PC-3 (cell line): ENCODE measurements at regions of chr17 and their contacts with region 1.

Region 1: GRCh38 chr17:76758570-76758969 is 20.7 kb downstream of the MFSD11 start:
- DNase-seq: no peak
- ATAC-seq: no peak
- H3K4me3 ChIP-seq: no peak overlapping the region
- H3K27ac ChIP-seq: no peak overlapping the region
- H3K4me1 ChIP-seq: no peaks in the 10 kb centered on the region
- H3K27me3 ChIP-seq: no peaks in the 10 kb centered on the region
- CTCF ChIP-seq: no peak

Region 2: DNA sequence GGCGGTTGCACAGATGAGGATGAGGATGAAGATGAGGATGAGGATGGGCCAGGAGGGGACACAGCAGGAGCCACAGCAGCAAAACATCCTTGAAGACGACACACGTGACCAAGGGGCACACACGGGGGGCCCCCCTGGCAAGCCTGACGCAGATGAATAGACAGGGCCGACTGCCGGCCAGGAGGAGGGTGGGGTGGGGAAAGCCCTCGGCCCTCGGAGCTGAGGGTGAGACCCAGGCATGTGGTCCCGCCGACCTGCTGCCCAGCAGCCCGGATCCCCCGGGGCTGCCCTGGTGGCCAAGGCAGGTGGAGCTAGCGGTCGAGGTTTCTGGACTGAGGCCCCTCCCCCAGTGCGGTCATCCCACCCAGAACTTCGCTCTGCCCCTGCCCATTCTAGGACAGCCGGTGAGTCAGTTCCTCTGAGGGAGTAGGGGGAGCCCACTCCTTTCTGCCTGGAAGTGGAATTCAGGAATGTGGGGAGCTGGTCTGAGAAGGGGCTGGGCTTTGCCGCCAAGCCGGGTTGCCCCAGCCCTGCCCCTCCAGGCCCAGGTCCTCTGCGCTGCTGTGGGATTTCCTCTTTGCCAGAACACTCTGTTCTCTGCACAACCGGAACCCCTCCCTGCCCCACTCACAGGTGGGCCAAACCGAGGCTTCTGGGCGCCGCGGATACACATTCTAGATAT is 231.0 kb before region 1 on chr17:
- CTCF ChIA-PET with region 1: no interaction called
- POLR2A ChIA-PET with region 1: no interaction called
- intact Hi-C with region 1: no loop called
- DNase-seq: peak; percentile 85
- ATAC-seq: peak; percentile 59
- H3K4me3 ChIP-seq: peak overlapping the region; percentile 55
- H3K27ac ChIP-seq: peak overlapping the region; percentile 16; the same call in 1 of the 2 replicates
- H3K4me1 ChIP-seq: peaks cover 57% of the 10 kb centered on the region
- H3K27me3 ChIP-seq: no peaks in the 10 kb centered on the region
- CTCF ChIP-seq: no peak

Region 3: DNA sequence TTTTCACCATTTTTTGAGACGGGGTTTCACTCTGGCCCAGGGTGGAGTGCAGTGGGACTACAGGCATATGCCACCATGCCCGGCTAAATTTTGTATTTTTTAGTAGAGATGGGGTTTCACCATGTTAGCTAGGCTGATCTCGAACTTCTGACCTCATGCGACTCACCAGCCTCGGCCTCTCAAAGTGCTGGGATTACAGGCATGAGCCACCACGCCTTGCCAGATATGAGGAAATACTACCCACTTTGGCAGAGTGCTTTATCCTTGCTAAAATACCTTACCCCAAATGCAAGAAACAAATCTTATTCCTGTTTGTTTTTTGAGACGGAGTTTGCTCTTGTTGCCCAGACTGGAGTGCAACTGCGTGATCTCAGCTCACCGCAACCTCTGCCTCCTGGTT is 46.7 kb after region 1 on chr17:
- CTCF ChIA-PET with region 1: no interaction called
- POLR2A ChIA-PET with region 1: interaction called, 20 read pairs
- intact Hi-C with region 1: no loop called
- DNase-seq: peak; percentile 61
- ATAC-seq: peak; percentile 67
- H3K4me3 ChIP-seq: no peak overlapping the region
- H3K27ac ChIP-seq: no peak overlapping the region
- H3K4me1 ChIP-seq: peaks cover 6% of the 10 kb centered on the region
- H3K27me3 ChIP-seq: no peaks in the 10 kb centered on the region
- CTCF ChIP-seq: no peak